Sciatic nerve (tissue), 2 donors: ENCODE measurements at regions of chr16 and their contacts with region 1.

Region 1: DNA sequence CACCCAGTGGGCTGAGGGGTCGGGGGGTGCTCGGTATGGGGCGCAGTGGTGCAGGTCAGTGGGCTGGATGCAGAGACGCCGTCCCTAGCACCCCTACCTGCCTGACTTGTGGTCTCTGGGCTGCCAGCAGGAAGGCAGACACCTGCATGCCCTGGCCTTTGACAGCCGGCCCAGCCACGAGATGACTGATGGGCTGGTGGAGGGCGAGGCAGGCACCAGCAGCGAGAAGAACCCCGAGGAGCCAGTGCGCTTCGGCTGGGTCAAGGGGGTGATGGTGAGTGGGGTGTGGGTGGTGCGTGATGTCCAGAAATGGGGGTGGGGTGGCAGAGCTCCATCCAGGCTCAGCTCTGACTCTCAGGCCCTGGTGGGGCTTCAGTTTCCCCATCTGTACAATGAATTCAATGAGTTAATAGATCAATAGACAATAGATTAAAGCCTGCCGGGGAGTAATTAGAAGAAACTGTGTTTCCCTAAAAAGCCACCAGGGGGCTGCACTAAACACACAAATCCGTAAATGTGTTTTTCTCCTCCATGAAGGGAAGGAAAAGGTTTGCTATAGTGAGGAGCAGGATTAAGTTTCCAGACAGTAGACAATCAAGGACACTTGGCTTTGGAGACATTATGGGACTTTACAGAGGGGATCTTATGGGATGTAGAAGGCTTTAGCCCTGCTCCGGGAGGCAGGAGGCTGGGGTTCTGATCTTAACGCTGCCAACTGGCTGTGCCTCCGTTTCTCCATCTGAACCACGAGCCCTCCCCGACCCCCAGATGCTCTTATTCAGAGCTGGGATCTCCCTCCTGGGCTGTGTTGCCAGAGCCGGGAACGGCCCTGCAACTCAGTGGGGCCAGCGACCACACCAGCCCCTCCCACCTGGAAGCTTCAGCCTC is 2.2 kb downstream of the SLC12A3 start:
- DNase-seq: no peak
- ATAC-seq: peak; percentile 54

Region 2: DNA sequence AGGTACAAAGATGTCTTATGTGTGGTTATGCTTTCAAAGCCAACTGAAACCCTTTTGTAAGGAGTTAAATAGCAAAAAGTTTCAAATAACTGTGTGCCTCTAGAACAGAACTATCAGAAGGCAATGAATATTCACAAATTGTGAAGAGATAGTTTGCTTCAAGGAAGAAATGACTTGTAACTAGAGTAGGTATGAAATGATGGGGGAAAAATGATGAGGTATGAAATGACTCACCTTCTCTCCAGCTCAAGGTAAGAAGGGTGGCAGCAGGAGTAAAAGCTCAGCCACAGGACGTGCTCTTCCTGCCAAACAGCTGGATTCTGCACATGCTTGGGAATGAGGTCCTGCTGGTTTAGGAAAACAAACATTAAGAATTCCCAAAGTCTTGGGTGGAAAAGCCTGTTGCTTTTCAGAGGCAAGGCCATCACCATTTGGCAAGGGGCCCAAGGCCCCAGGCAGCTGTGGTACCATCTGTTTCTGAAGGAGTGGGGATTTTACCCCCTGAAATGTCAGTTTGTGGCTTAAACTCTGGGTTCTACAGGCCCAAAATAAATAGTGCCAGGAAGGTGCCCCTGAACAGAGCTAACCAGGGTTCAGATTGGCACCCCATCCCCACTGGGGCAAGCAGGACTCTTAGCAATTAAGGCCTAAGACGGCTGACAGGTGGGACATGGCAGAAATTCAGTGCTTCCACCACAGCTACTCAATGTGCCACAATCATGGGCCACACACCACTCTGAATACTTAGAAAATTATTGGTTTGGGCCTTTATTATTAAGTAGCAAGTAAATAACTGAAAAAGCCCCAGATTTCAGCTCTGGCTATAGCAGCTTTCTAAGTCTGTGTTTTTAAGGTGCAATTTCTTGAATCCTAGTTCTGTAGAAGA is 78.0 kb after region 1 on chr16:
- intact Hi-C with region 1: loop called (anchors 10 kb)
- DNase-seq: no peak
- ATAC-seq: peak; percentile 10